HepG2 (cell line): ENCODE measurements at regions of chr10 and their contacts with region 1.

Region 1: GRCh38 chr10:115432188-115432775 is 339.1 kb downstream of the ATRNL1 start:
- DNase-seq: peak; percentile 31
- ATAC-seq: peak; percentile 60; the same call in 1 of the 3 replicates
- H3K4me3 ChIP-seq: no peak overlapping the region
- H3K27ac ChIP-seq: no peak overlapping the region
- H3K4me1 ChIP-seq: no peaks in the 10 kb centered on the region
- H3K27me3 ChIP-seq: no peaks in the 10 kb centered on the region
- CTCF ChIP-seq: peak; percentile 57
- EP300 ChIP-seq: no peak
- POLR2A ChIP-seq: no peak
- RAD21 ChIP-seq: no peak

Region 2: DNA sequence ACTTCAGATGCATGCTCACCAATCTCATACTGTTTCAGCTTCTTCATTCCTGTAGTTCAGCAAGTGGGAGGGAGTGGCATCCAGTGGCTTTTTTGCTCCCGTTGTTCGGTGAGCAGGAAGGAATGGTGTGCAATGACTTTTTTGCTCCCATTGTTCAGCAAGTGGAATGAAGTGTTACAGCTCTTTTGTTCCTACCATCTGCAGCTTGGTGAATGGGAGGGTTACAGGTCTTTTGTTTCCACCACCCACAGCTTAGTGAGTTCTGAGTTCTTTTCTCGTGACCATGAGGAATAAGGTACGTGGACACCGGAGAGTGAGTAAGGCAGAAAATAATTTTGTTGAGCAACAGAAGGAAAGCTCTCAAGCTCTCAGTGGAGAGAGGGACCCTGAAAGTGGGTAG is 24.5 kb after region 1 on chr10:
- CTCF ChIA-PET with region 1: no interaction called
- POLR2A ChIA-PET with region 1: no interaction called
- in situ Hi-C with region 1: no loop called
- intact Hi-C with region 1: no loop called
- DNase-seq: no peak
- ATAC-seq: no peak
- H3K4me3 ChIP-seq: no peak overlapping the region
- H3K27ac ChIP-seq: no peak overlapping the region
- H3K4me1 ChIP-seq: no peaks in the 10 kb centered on the region
- H3K27me3 ChIP-seq: no peaks in the 10 kb centered on the region; a peak in 1 of 5 replicates
- CTCF ChIP-seq: no peak
- EP300 ChIP-seq: no peak
- POLR2A ChIP-seq: no peak
- RAD21 ChIP-seq: no peak

Region 3: DNA sequence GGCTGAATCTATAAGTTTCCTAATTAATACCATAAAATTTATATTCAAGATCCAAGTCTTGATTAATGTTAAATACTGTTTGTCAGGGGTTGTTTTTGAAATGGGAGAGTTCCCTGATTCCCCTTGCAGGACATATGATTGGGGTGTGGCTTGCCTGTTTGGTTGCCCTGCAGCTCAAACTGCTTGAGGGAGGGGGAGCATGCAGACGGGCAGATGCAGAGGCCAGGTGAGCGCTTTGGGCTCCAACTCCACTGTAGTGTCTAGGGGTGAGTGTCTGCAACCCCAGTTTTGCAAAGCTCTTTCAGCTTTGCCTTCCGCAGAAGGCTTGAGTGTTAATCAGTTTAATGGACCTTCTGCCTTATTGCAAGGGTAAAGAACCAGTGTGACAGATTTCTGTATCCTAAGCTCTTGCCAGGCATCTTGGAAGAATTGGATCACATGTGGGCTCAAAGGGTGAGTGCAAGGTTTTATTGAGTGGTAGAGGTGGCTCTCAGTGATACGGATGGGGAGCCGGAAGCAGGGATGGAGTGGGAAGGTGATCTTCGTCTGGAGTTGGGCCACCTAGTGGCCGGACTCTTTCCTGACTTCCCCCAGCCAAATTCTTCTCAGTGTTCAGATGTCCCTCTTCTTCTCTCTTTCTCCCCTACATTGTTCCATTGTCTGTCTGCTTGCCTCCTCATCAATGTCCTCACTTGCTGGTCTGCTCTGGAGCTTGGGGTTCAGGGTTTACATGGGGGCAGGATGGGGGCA is 140.6 kb after region 1 on chr10:
- CTCF ChIA-PET with region 1: interaction called, 3 read pairs
- POLR2A ChIA-PET with region 1: no interaction called
- in situ Hi-C with region 1: no loop called
- intact Hi-C with region 1: loop called (anchors 1 kb)
- DNase-seq: no peak
- ATAC-seq: peak; percentile 73
- H3K4me3 ChIP-seq: no peak overlapping the region
- H3K27ac ChIP-seq: no peak overlapping the region
- H3K4me1 ChIP-seq: no peaks in the 10 kb centered on the region
- H3K27me3 ChIP-seq: no peaks in the 10 kb centered on the region
- CTCF ChIP-seq: peak; percentile 30; the same call in 1 of the 2 replicates
- EP300 ChIP-seq: no peak
- POLR2A ChIP-seq: no peak
- RAD21 ChIP-seq: no peak